KBM-7 (cell line): ENCODE measurements at regions of chrX and their contacts with region 1.

Region 1: DNA sequence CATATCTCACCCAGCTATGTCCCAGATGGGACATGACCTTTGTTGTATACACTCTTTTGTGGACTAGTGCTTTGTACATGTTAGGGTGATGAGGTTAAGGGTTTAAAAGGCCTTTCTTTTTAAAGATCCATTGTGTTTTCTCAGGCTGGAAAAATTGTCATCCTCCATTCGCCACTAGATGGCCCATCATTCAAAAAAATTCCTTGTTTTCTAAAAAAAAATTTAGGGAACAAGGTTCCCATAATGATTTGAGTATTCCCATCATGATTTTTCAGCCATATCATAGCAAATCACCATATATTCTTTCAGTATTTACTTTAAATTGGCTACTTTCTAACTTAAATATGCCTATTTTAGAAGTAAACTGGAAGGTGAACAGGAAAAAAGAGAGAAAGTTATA is 91.9 kb upstream of the TMEM164 start:
- DNase-seq: peak; percentile 32

Region 2: DNA sequence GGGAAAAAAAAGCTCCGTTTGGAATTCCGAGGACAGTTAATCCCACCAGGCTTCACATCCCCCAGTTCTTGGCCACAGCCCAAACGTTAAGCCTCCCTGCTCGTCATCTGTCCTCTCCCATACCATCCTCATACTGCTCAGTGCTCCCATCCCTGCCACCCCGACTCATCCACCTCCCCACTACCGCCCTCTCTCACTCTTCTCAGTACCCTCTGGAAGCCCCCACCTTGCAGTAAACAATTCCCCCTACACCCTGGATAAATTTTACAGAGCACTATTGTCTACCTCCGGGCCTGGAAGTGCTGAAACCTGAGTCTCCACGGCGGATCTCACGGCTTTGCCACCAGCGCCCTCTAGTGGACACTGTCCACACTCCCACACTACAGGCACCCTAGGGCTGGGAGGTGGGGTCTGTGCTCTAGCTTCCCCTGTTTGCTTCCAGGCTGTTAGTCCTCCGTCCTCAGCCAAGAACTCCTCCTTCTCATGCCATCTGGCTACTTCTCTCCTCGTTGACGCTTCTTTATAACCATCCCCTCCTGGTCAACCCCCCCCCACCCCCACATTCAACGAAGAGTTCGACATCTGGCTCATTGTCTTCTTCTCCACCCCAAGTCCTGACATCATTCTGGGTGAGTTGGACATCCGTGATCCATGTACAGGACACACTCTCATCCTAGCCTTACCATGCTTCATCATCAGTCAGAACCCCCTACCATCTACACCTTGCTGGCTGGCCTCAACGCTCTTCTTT is 502.1 kb after region 1 on chrX:
- in situ Hi-C with region 1: loop called (anchors 25 kb)
- DNase-seq: peak; percentile 87